ENCODE measurements at regions of chr9 and their contacts with region 1.

Region 1: DNA sequence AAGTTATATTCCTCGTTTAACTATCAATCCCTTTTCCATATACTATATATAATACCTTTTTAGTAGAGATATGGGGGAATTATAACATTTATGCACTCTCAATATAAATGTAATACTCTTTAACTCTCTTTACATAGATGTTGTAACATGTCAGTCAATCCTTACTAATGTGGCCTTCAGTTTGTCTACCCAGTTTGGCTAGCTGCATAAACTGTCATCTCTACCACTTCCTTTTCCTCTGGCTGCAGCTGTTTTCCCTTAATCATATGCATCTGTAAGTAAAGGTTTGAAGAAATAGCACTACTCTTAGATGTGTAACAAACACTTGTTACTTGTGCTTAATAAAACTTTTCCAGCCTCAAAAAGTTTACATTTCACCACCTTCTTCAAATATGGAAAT is 13.4 kb downstream of the ABHD17B start:
- DNase-seq: no peak
- ATAC-seq: no peak
- H3K4me3 ChIP-seq: no peak overlapping the region
- H3K27ac ChIP-seq: no peak overlapping the region
- H3K4me1 ChIP-seq: peaks cover 36% of the 10 kb centered on the region
- H3K27me3 ChIP-seq: no peaks in the 10 kb centered on the region
- CTCF ChIP-seq: no peak
- POLR2A ChIP-seq: no peak

Region 2: GRCh38 chr9:71830929-71831328 is 66.6 kb before region 1 on chr9:
- intact Hi-C with region 1: loop called (anchors 10 kb)
- DNase-seq: no peak
- ATAC-seq: no peak
- H3K4me3 ChIP-seq: no peak overlapping the region
- H3K27ac ChIP-seq: no peak overlapping the region
- H3K4me1 ChIP-seq: no peaks in the 10 kb centered on the region
- H3K27me3 ChIP-seq: no peaks in the 10 kb centered on the region
- CTCF ChIP-seq: no peak
- POLR2A ChIP-seq: no peak